ENCODE measurements at regions of chr21 and their contacts with region 1.

Region 1: GRCh38 chr21:45820171-45821091 is 161.1 kb upstream of the COL6A1 start:
- DNase-seq: peak; percentile 91
- ATAC-seq: peak; percentile 32
- H3K4me3 Mint-ChIP-seq: no peak overlapping the region
- H3K27ac Mint-ChIP-seq: peak overlapping the region; percentile 99
- H3K4me1 Mint-ChIP-seq: peaks cover 51% of the 10 kb centered on the region
- H3K27me3 Mint-ChIP-seq: peaks cover 2% of the 10 kb centered on the region

Region 2: DNA sequence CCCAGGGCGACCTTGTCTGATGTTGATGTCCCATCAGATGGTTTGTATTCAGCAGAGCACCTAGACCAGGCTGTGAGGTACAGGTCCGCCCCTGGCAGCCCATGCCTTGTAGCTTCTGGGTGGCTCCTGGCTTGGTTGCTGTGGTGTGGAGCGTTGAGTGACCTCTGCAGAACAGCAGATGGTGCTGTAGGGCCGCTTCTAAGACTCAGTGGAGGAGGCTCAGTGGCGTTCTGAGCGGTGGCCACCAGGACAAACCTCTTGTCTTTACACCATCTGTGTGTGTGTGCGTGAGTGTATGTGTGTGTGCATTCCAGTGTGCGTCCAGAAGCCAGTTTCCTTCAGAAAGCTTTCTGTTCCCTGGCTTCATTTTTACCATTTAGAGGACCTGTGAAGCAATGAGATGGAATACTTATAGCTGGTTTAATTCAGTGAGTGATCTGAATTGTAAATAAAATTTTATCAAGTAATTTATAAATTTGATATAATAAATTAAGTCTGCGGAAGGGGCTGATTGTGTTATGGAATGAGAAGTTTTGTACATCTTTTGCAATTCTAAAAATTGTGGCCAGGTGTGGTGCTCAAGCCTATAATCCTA is 680.0 kb before region 1 on chr21:
- CTCF ChIA-PET with region 1: interaction called, 3 read pairs
- POLR2A ChIA-PET with region 1: no interaction called
- intact Hi-C with region 1: loop called in 1 of 2 experiments (anchors 1 kb)
- DNase-seq: peak; percentile 82
- ATAC-seq: peak; percentile 94
- H3K4me3 Mint-ChIP-seq: no peak overlapping the region
- H3K27ac Mint-ChIP-seq: no peak overlapping the region
- H3K4me1 Mint-ChIP-seq: peaks cover 9% of the 10 kb centered on the region
- H3K27me3 Mint-ChIP-seq: no peaks in the 10 kb centered on the region

Region 3: DNA sequence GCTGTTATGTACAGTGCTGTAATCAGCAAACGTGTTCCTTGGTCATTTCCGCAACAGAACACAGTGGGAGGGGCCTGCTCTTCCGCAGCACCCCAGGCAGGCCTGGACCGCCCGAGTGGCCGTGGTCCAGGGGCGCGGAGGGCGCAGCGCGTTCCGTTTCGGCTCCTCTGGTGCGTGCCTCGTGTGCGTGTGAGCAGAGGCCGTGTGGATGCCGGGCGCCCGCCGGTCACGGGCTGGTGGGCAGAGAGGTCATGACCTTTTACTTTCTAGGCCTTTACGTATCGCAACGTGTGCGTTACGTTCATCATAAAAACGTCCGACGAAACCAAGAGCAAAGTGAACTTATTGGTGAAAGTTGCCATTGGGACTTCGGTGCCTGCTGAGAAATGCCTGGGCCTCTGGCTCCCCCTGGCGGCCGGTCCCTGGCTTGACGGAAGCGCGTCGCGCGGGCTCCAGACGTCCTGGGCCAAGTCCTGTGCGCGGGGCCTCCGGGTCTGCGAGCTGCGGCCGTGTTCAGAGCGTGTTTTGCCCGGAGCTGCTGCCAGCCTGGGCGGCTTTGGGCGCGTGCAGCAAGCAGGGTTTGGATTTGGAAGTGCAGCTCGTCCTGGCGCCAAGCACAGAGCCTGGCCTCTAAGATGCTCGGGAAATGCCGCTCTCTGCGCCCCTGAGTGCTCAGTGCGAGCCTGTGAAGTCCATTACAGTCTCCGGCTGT is 381.1 kb before region 1 on chr21:
- CTCF ChIA-PET with region 1: interaction called, 3 read pairs
- POLR2A ChIA-PET with region 1: no interaction called
- intact Hi-C with region 1: loop called in 1 of 2 experiments (anchors 1 kb)
- DNase-seq: peak; percentile 92
- ATAC-seq: peak; percentile 90
- H3K4me3 Mint-ChIP-seq: peak overlapping the region; percentile 41
- H3K27ac Mint-ChIP-seq: no peak overlapping the region
- H3K4me1 Mint-ChIP-seq: peaks cover 4% of the 10 kb centered on the region
- H3K27me3 Mint-ChIP-seq: peaks cover 3% of the 10 kb centered on the region

Region 4: DNA sequence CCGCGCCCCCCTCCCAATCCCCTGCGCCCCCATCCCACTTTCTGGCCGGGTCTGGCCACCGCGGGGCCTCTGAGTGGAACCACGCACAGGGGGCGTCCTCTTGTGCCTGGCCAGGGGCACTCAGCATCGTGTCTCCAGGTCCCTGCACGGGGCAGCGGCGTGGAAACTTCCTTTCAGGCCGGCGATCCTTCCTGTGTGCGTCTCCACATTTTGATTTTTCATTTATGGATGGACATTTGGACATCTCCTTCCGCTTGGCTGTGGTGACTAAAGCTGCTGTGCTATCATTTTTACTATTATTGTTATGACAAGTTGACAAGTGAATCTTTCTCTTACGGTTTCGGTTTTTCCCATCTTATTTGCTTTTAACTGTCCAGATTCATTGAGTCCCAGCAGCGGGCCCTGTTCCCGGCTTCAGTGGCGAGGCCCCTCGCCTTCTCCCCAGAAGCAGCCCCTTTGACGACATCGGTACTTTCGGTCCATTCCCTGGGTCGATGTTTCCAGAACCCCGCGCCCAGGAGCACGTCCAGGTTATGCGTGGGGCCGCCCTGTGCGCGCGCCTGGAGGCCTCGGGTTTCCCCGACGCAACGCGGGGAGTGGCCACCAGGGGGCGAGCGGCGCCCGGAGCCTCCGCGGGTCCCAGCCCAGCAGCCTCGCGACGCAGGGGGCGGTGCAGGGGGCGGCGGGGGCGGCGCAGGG is 265.8 kb before region 1 on chr21:
- CTCF ChIA-PET with region 1: interaction called, 4 read pairs
- POLR2A ChIA-PET with region 1: interaction called, 4 read pairs
- intact Hi-C with region 1: loop called (anchors 1 kb)
- DNase-seq: peak; percentile 95
- ATAC-seq: peak; percentile 62
- H3K4me3 Mint-ChIP-seq: peak overlapping the region; percentile 95
- H3K27ac Mint-ChIP-seq: peak overlapping the region; percentile 97
- H3K4me1 Mint-ChIP-seq: peaks cover 33% of the 10 kb centered on the region
- H3K27me3 Mint-ChIP-seq: no peaks in the 10 kb centered on the region

Region 5: DNA sequence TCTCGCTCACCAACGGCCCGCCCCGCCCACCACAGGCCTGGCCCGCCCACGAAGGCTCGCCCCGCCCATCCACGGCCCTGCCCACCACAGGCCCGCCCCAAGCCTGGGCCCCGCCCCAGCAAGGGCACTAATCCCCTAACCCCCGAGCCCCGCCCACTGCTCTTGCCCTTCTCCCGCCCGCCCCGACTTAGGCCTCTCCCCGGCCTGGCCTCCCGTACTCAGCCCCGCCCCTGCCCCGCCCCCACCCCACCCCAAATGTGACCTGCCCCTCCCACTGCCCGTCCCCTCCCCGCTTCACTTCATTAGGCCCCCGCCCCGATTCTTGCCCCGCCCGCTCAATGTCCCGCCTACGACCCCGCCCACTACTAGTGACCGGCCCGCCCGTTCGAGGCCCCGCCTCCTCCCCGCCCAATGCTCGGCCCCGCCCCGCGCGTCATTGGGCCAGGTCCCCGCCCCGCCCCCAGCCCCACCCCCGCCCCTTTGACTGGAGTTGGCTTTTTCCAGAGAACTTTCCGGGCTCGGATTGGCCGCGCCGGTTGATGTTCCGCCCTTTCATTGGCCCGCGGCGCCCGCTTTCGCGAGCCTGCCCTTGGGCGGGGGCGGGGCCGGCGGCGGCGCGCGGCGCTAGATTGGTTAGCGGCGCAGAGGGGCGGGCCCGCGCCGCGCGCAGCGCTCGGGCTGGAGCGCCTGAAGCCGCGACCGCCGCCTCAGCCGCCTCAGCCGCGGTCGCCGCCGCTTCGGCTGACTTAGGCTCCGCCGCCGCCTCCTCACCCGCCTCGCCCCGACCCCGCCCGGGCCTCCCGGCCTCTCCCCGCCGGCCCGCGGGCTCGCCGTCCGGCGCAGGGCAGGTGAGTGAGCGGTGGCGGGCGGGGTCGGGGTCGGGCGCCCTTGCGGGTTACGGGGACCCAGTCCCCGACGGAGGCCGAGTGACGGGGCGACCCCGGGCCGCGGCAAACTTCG is 177.1 kb before region 1 on chr21 and contains the start of gene PCBP3:
- CTCF ChIA-PET with region 1: interaction called, 4 read pairs
- POLR2A ChIA-PET with region 1: interaction called, 3 read pairs
- intact Hi-C with region 1: loop called (anchors 1 to 5 kb)
- DNase-seq: peak; percentile 99
- ATAC-seq: peak; percentile 84
- H3K4me3 Mint-ChIP-seq: peak within 1 kb of the TSS; percentile 78
- H3K27ac Mint-ChIP-seq: peak within 1 kb of the TSS; percentile 70
- H3K4me1 Mint-ChIP-seq: peaks cover 47% of the 10 kb centered on the region
- H3K27me3 Mint-ChIP-seq: peaks cover 4% of the 10 kb centered on the region
- total RNA-seq, gene PCBP3: 12.2 to 13.2 TPM

Region 6: DNA sequence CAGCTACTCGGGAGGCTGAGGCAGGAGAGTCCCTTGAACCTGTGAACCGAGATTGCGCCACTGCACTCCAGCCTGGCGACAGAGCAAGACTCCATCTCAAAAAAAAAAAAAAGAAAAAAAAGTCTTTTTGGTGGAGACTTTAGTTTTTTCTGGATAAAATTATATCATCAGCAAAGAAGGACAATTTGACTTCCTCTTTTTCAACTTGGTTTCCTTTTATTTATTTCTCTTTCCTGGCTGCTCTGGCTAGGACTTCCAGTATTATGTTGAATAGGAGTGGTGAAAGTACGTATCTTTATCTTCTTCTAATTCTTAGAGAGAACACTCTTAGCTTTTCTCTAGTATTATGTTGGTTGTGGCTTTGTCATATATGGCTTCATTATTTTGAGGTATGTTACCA is 46.1 kb before region 1 on chr21:
- CTCF ChIA-PET with region 1: no interaction called
- POLR2A ChIA-PET with region 1: no interaction called
- intact Hi-C with region 1: no loop called
- DNase-seq: no peak
- ATAC-seq: no peak
- H3K4me3 Mint-ChIP-seq: no peak overlapping the region
- H3K27ac Mint-ChIP-seq: no peak overlapping the region
- H3K4me1 Mint-ChIP-seq: peaks cover 22% of the 10 kb centered on the region
- H3K27me3 Mint-ChIP-seq: no peaks in the 10 kb centered on the region

Region 7: DNA sequence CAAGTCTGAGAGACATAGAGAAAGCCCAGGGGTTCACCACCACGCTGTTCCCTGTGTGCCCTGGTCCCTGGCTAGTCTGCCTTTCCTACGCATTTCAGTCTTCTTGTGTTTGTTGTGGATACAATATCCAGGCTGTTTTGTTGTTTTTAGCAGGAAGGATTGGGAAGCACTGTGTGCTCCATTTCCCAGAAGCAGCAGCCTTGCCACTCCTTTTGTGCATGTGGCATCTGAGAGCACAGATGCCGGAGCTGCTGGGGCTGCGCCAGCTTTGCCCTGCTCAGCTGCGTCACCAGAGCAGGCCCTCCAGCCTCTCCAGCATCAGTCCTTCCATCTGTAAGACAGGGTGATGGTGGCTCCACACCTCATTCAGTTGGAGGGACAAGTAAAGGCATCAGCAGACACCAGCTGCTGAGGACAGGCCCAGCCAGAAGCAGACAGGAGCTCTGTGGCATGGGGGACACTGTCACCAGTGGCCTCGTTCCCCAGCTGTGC is 66.7 kb after region 1 on chr21:
- CTCF ChIA-PET with region 1: interaction called, 4 read pairs
- POLR2A ChIA-PET with region 1: no interaction called
- intact Hi-C with region 1: loop called (anchors 1 to 5 kb)
- DNase-seq: no peak
- ATAC-seq: no peak
- H3K4me3 Mint-ChIP-seq: peak overlapping the region; percentile 21
- H3K27ac Mint-ChIP-seq: peak overlapping the region; percentile 68
- H3K4me1 Mint-ChIP-seq: peaks cover 86% of the 10 kb centered on the region
- H3K27me3 Mint-ChIP-seq: peaks cover 2% of the 10 kb centered on the region

Measured in activated CD4-positive, alpha-beta T cell treated with anti-CD3 and anti-CD28 coated beads for 36 hours (primary cell).